ENCODE measurements at regions of chr17 and their contacts with region 1.

Region 1: GRCh38 chr17:32142038-32142856 is at the start of gene RHOT1:
- DNase-seq: peak; percentile 66
- ATAC-seq: peak; percentile 85
- H3K4me3 ChIP-seq: peak within 1 kb of the TSS; percentile 95 to 100
- H3K27ac ChIP-seq: peak within 1 kb of the TSS; percentile 94
- H3K4me1 ChIP-seq: peaks cover 16% of the 10 kb centered on the region
- H3K27me3 ChIP-seq: no peaks in the 10 kb centered on the region
- CTCF ChIP-seq: peak; percentile 86
- total RNA-seq, gene RHOT1: 39.2 TPM

Region 2: GRCh38 chr17:32123782-32124181 is 18.5 kb before region 1 on chr17:
- CTCF ChIA-PET with region 1: interaction called, 10 read pairs
- POLR2A ChIA-PET with region 1: no interaction called
- in situ Hi-C with region 1: no loop called
- intact Hi-C with region 1: no loop called
- DNase-seq: no peak
- ATAC-seq: no peak
- H3K4me3 ChIP-seq: no peak overlapping the region
- H3K27ac ChIP-seq: no peak overlapping the region
- H3K4me1 ChIP-seq: peaks cover 17% of the 10 kb centered on the region
- H3K27me3 ChIP-seq: no peaks in the 10 kb centered on the region
- CTCF ChIP-seq: no peak

Measured in Panc1 (cell line).